ENCODE measurements at regions of chr11 and their contacts with region 1.

Region 1: GRCh38 chr11:108601150-108601549 is 7.6 kb upstream of the EXPH5 start:
- DNase-seq: no peak
- ATAC-seq: no peak
- H3K4me3 ChIP-seq: no peak overlapping the region
- H3K27ac ChIP-seq: no peak overlapping the region
- H3K4me1 ChIP-seq: no peaks in the 10 kb centered on the region
- H3K27me3 ChIP-seq: peaks cover 0 to 17% (median 0%) of the 10 kb centered on the region in 9 donors
- CTCF ChIP-seq: no peak
- POLR2A ChIP-seq: no peak

Region 2: GRCh38 chr11:108524434-108524833 is 76.7 kb before region 1 on chr11:
- intact Hi-C with region 1: loop called in 1 of 10 experiments (anchors 2 kb)
- DNase-seq: no peak
- ATAC-seq: no peak
- H3K4me3 ChIP-seq: no peak overlapping the region
- H3K27ac ChIP-seq: no peak overlapping the region
- H3K4me1 ChIP-seq: no peaks in the 10 kb centered on the region
- H3K27me3 ChIP-seq: no peaks in the 10 kb centered on the region
- CTCF ChIP-seq: no peak
- POLR2A ChIP-seq: no peak

Measured in heart left ventricle (tissue), 16 donors.